ENCODE measurements at regions of chr17 and their contacts with region 1.

Region 1: DNA sequence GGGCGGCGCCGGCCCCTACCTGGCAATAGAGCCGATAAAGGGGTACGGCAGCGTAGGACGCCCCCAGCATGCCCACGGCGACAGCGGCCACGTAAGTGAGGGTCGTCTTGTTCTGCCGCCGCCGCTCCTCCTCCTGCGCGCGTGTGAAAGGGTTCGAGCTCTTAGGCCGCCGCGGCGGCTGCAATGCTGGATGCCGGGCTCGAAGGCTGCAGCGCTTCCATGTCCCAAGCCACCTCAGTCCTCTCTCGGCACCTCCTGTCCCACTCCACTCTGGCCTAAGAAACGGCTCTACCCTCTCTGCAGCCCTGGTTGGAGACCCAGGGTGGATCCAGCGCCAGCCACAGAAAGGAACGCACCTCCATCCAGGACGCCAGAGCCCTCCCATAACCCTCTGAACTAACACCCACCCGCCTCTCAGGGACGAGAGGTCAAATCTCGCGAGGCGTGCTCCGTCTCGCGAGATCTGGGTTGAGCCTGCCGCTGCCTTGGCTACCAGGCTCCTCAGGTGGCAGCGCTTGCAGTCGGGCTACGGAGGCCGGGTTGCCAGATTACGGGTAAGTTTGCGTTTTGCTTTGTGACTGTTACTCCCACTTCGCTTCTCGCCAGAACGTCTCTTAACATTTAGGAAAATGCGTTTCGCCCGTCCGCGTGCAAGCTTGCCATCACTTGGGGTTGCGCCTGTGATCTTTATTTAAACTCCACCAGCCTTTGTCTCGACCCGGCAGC is at the starts of genes COX11 and STXBP4:
- DNase-seq: peak; percentile 88 to 96 (median 94)
- ATAC-seq: peak; percentile 97
- H3K4me3 ChIP-seq: peak within 1 kb of the TSS; percentile 98
- H3K4me3 Mint-ChIP-seq: no peak within 1 kb of the TSS
- H3K27ac ChIP-seq: peak within 1 kb of the TSS; percentile 85
- H3K27ac Mint-ChIP-seq: no peak within 1 kb of the TSS
- H3K4me1 ChIP-seq: peaks cover 8 to 15% of the 10 kb centered on the region in 2 donors
- H3K4me1 Mint-ChIP-seq: peaks cover 5 to 41% (median 30%) of the 10 kb centered on the region in 7 donors
- H3K27me3 ChIP-seq: no peaks in the 10 kb centered on the region
- H3K27me3 Mint-ChIP-seq: no peaks in the 10 kb centered on the region
- total RNA-seq, gene COX11: 25.7 to 92.9 (median 53.6) TPM
- total RNA-seq, gene STXBP4: 5.2 to 12.1 (median 9.4) TPM

Region 2: DNA sequence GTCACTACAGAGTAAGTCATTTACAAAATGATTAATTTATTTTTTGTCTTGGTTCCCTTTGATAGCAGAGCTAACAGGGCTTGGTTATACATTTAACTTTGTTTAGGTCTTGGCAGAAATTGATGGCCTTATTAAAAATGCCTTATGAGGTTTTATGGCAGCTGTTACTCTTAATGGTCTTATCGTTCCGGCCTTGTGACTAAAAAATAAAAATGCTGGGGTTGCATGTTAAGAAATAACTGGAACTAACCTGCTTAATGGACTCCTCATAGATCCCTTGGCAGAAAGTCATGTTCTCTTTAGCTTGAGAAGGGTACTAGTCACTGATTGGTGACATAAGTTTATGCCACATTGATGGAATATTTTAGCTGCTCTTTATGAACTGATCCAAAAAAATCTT is 18.3 kb before region 1 on chr17:
- CTCF ChIA-PET with region 1: no interaction called
- POLR2A ChIA-PET with region 1: no interaction called
- intact Hi-C with region 1: no loop called
- DNase-seq: no peak
- ATAC-seq: no peak
- H3K4me3 ChIP-seq: no peak overlapping the region
- H3K4me3 Mint-ChIP-seq: no peak overlapping the region
- H3K27ac ChIP-seq: no peak overlapping the region
- H3K27ac Mint-ChIP-seq: no peak overlapping the region
- H3K4me1 ChIP-seq: no peaks in the 10 kb centered on the region
- H3K4me1 Mint-ChIP-seq: peaks cover 0 to 6% (median 2%) of the 10 kb centered on the region in 7 donors
- H3K27me3 ChIP-seq: no peaks in the 10 kb centered on the region
- H3K27me3 Mint-ChIP-seq: peaks cover 6 to 25% (median 7%) of the 10 kb centered on the region in 5 donors

Region 3: DNA sequence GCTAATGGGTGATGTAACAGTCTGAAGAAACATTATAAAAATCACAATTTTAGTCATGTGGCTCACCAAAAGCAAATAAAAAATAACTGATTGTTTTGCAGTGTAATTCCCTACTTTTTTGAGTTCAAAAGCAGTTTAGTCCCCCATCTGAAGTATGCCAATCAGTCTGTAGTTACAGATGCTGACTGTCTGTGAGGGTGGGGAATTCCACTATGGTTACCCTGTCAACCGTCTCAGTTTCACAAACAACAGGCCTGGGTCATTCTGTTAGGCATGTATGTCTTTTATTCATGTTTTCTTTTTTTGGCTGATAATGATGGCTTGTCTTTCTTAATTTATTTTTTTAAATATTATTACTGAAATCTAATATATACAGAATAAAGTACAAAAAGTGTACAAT is 69.4 kb after region 1 on chr17:
- CTCF ChIA-PET with region 1: no interaction called
- POLR2A ChIA-PET with region 1: no interaction called
- intact Hi-C with region 1: loop called in 1 of 2 experiments (anchors 1 kb)
- DNase-seq: peak in 1 of 9 donors; percentile 32
- ATAC-seq: no peak
- H3K4me3 ChIP-seq: no peak overlapping the region
- H3K4me3 Mint-ChIP-seq: no peak overlapping the region
- H3K27ac ChIP-seq: no peak overlapping the region
- H3K27ac Mint-ChIP-seq: peak overlapping the region in 1 of 9 donors; percentile 25
- H3K4me1 ChIP-seq: no peaks in the 10 kb centered on the region
- H3K4me1 Mint-ChIP-seq: peaks cover 0 to 22% (median 0%) of the 10 kb centered on the region in 7 donors
- H3K27me3 ChIP-seq: no peaks in the 10 kb centered on the region
- H3K27me3 Mint-ChIP-seq: no peaks in the 10 kb centered on the region

Region 4: GRCh38 chr17:55238179-55238930 is 269.9 kb after region 1 on chr17:
- CTCF ChIA-PET with region 1: no interaction called
- POLR2A ChIA-PET with region 1: no interaction called
- intact Hi-C with region 1: loop called (anchors 1 kb)
- DNase-seq: peak; percentile 60 to 81 (median 75)
- ATAC-seq: peak; percentile 92
- H3K4me3 ChIP-seq: peak overlapping the region; percentile 65
- H3K4me3 Mint-ChIP-seq: peak overlapping the region; percentile 84 to 94 (median 86)
- H3K27ac ChIP-seq: peak overlapping the region; percentile 14
- H3K27ac Mint-ChIP-seq: peak overlapping the region in 4 of 9 donors; percentile 16 to 76 (median 56)
- H3K4me1 ChIP-seq: peaks cover 6 to 19% of the 10 kb centered on the region in 2 donors
- H3K4me1 Mint-ChIP-seq: peaks cover 9 to 23% (median 19%) of the 10 kb centered on the region in 7 donors
- H3K27me3 ChIP-seq: no peaks in the 10 kb centered on the region
- H3K27me3 Mint-ChIP-seq: peaks cover 12 to 46% (median 21%) of the 10 kb centered on the region in 5 donors

Region 5: GRCh38 chr17:55264645-55265298 is 296.3 kb after region 1 on chr17 and contains the start of gene HLF:
- CTCF ChIA-PET with region 1: no interaction called
- POLR2A ChIA-PET with region 1: no interaction called
- intact Hi-C with region 1: loop called (anchors 1 to 10 kb)
- DNase-seq: peak; percentile 34 to 78 (median 68)
- ATAC-seq: peak; percentile 96
- H3K4me3 ChIP-seq: peak within 1 kb of the TSS; percentile 58
- H3K4me3 Mint-ChIP-seq: peak within 1 kb of the TSS; percentile 74 to 85 (median 80)
- H3K27ac ChIP-seq: no peak within 1 kb of the TSS
- H3K27ac Mint-ChIP-seq: peak within 1 kb of the TSS in 2 of 9 donors; percentile 41 to 49
- H3K4me1 ChIP-seq: peaks cover 15% of the 10 kb centered on the region in 2 donors
- H3K4me1 Mint-ChIP-seq: peaks cover 8 to 37% (median 21%) of the 10 kb centered on the region in 7 donors
- H3K27me3 ChIP-seq: peaks cover 13 to 29% of the 10 kb centered on the region in 2 donors
- H3K27me3 Mint-ChIP-seq: peaks cover 50 to 90% (median 72%) of the 10 kb centered on the region in 5 donors
- total RNA-seq, gene HLF: 0.19 to 2.6 (median 0.48) TPM

Region 6: GRCh38 chr17:55576996-55577586 is 608.7 kb after region 1 on chr17:
- CTCF ChIA-PET with region 1: no interaction called
- POLR2A ChIA-PET with region 1: no interaction called
- intact Hi-C with region 1: loop called in 1 of 2 experiments (anchors 5 kb)
- DNase-seq: peak in 8 of 9 donors; percentile 11 to 56 (median 50)
- ATAC-seq: peak; percentile 88
- H3K4me3 ChIP-seq: peak overlapping the region; percentile 49
- H3K4me3 Mint-ChIP-seq: no peak overlapping the region
- H3K27ac ChIP-seq: peak overlapping the region; percentile 60
- H3K27ac Mint-ChIP-seq: no peak overlapping the region
- H3K4me1 ChIP-seq: peaks cover 0 to 16% of the 10 kb centered on the region in 2 donors
- H3K4me1 Mint-ChIP-seq: peaks cover 0 to 10% (median 0%) of the 10 kb centered on the region in 7 donors
- H3K27me3 ChIP-seq: no peaks in the 10 kb centered on the region
- H3K27me3 Mint-ChIP-seq: peaks cover 0 to 13% (median 0%) of the 10 kb centered on the region in 5 donors

Region 7: DNA sequence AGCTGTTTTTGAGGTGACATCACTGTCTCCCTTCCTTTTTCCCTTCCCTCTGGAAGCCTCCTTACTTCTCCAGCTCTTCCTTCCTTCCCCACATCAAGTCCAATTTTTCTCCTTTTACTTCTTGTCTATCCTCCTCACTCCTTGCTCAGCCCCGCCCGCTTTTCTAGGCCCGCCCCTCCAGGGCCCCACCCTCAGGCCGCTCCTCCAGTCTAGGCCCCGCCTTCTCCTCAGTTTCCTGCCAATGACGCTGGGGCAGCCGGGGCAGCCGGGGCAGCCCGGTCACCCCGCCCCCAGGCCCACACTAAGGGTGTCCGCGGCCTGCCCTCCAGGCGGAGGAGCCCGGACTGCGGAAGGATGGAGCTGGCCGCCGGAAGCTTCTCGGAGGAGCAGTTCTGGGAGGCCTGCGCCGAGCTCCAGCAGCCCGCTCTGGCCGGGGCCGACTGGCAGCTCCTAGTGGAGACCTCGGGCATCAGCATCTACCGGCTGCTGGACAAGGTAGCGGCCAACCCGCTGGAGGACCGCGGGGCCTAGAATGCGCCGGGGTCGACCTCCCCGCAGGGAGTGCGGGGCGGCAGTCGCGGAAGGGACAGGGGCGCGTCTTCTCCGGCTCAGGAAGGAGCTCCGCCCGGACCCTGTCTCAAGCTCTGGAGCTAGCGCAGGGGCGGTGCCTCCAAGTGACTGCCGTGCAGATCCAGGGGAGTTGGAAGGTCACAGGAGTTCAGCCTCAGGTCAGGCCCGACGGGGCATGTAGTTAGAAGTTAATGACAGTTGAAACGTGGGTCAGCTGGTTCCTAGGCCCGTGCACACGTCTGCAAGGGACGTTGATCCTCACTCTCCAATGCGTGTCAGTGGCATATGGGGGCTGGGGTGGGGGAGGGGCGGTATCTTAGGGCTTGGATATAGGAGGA is 782.6 kb after region 1 on chr17 and contains the start of gene PCTP:
- CTCF ChIA-PET with region 1: no interaction called
- POLR2A ChIA-PET with region 1: no interaction called
- intact Hi-C with region 1: loop called in 1 of 2 experiments (anchors 1 kb)
- DNase-seq: peak; percentile 61 to 88 (median 76)
- ATAC-seq: peak; percentile 99
- H3K4me3 ChIP-seq: peak within 1 kb of the TSS; percentile 71
- H3K4me3 Mint-ChIP-seq: peak within 1 kb of the TSS; percentile 72 to 90 (median 86)
- H3K27ac ChIP-seq: peak within 1 kb of the TSS; percentile 52
- H3K27ac Mint-ChIP-seq: peak within 1 kb of the TSS; percentile 11 to 89 (median 60)
- H3K4me1 ChIP-seq: peaks cover 0 to 5% of the 10 kb centered on the region in 2 donors
- H3K4me1 Mint-ChIP-seq: peaks cover 7 to 26% (median 19%) of the 10 kb centered on the region in 7 donors
- H3K27me3 ChIP-seq: no peaks in the 10 kb centered on the region
- H3K27me3 Mint-ChIP-seq: peaks cover 19 to 39% (median 20%) of the 10 kb centered on the region in 5 donors
- total RNA-seq, gene PCTP: 2.7 to 7.4 (median 3.5) TPM

Measured in naive thymus-derived CD4-positive, alpha-beta T cell (primary cell).